ENCODE measurements at regions of chr14 and their contacts with region 1.

Region 1: GRCh38 chr14:60184146-60184904 is 19.1 kb upstream of the DHRS7 start:
- DNase-seq: no peak
- ATAC-seq: peak; percentile 83
- H3K4me3 Mint-ChIP-seq: peak overlapping the region; percentile 59
- H3K27ac Mint-ChIP-seq: peak overlapping the region; percentile 82
- H3K4me1 Mint-ChIP-seq: peaks cover 15% of the 10 kb centered on the region
- H3K27me3 Mint-ChIP-seq: no peaks in the 10 kb centered on the region

Region 2: DNA sequence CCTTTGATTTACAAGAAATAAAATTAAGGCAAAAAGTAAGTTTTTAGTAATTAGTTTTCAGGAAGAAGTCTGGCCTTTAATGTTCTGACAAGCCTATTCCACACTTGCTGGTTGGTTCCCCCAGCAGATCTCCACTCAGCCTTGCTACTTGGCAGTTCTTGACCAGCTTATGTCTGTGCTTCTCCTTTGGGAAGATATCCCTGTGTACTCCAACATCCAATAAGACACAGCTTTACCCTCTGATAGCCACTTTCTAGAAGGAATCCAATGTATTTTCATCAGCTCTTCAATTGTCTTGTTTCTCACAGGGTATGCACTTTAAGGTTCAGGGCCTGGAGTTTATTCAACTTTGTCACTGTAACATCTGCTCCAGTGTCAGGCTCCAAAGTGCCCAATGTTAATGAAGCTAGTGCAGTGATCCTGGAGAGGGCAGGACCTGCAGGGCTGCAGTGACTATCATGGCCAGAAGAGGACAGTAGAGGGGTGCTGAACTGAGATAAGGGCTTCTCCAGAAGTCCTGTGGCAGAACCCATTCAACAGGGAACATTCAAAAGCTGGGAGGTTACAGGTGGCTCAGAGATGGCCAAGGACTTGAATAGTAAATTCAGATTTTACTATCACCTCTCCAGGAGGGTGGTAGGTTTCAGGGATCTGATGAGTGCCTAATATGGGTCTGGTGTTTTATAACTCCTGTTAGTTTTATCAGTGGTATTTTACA is 677.1 kb before region 1 on chr14:
- CTCF ChIA-PET with region 1: interaction called, 9 read pairs
- POLR2A ChIA-PET with region 1: no interaction called
- intact Hi-C with region 1: loop called in 1 of 2 experiments (anchors 1 kb)
- DNase-seq: peak; percentile 76
- ATAC-seq: peak; percentile 95
- H3K4me3 Mint-ChIP-seq: no peak overlapping the region
- H3K27ac Mint-ChIP-seq: no peak overlapping the region
- H3K4me1 Mint-ChIP-seq: peaks cover 5% of the 10 kb centered on the region
- H3K27me3 Mint-ChIP-seq: peaks cover 3% of the 10 kb centered on the region

Region 3: GRCh38 chr14:59632381-59632780 is 551.9 kb before region 1 on chr14:
- CTCF ChIA-PET with region 1: interaction called, 4 read pairs
- POLR2A ChIA-PET with region 1: no interaction called
- intact Hi-C with region 1: loop called (anchors 1 to 5 kb)
- DNase-seq: peak; percentile 52
- ATAC-seq: no peak
- H3K4me3 Mint-ChIP-seq: no peak overlapping the region
- H3K27ac Mint-ChIP-seq: no peak overlapping the region
- H3K4me1 Mint-ChIP-seq: peaks cover 2% of the 10 kb centered on the region
- H3K27me3 Mint-ChIP-seq: peaks cover 45% of the 10 kb centered on the region

Region 4: GRCh38 chr14:60064491-60065072 is 119.7 kb before region 1 on chr14:
- CTCF ChIA-PET with region 1: interaction called, 51 read pairs
- POLR2A ChIA-PET with region 1: no interaction called
- intact Hi-C with region 1: loop called (anchors 1 kb)
- DNase-seq: no peak
- ATAC-seq: no peak
- H3K4me3 Mint-ChIP-seq: no peak overlapping the region
- H3K27ac Mint-ChIP-seq: no peak overlapping the region
- H3K4me1 Mint-ChIP-seq: no peaks in the 10 kb centered on the region
- H3K27me3 Mint-ChIP-seq: peaks cover 3% of the 10 kb centered on the region

Region 5: GRCh38 chr14:60164712-60165546 is 19.4 kb before region 1 on chr14 and contains the start of gene DHRS7:
- CTCF ChIA-PET with region 1: interaction called, 15 read pairs
- POLR2A ChIA-PET with region 1: no interaction called
- intact Hi-C with region 1: loop called (anchors 1 to 2 kb)
- DNase-seq: peak; percentile 79
- ATAC-seq: peak; percentile 88
- H3K4me3 Mint-ChIP-seq: peak within 1 kb of the TSS; percentile 99
- H3K27ac Mint-ChIP-seq: peak within 1 kb of the TSS; percentile 99
- H3K4me1 Mint-ChIP-seq: peaks cover 41% of the 10 kb centered on the region
- H3K27me3 Mint-ChIP-seq: no peaks in the 10 kb centered on the region
- total RNA-seq, gene DHRS7: 27.9 to 46.3 TPM

Region 6: GRCh38 chr14:60235440-60235839 is 51.1 kb after region 1 on chr14:
- CTCF ChIA-PET with region 1: no interaction called
- POLR2A ChIA-PET with region 1: no interaction called
- intact Hi-C with region 1: no loop called
- DNase-seq: no peak
- ATAC-seq: no peak
- H3K4me3 Mint-ChIP-seq: no peak overlapping the region
- H3K27ac Mint-ChIP-seq: no peak overlapping the region
- H3K4me1 Mint-ChIP-seq: no peaks in the 10 kb centered on the region
- H3K27me3 Mint-ChIP-seq: peaks cover 5% of the 10 kb centered on the region